ENCODE measurements at regions of chr6 and their contacts with region 1.

Region 1: GRCh38 chr6:105484238-105485161 is 81.6 kb upstream of the PREP start:
- DNase-seq: peak; percentile 64
- H3K4me3 ChIP-seq: no peak overlapping the region
- H3K27ac ChIP-seq: no peak overlapping the region
- H3K4me1 ChIP-seq: peaks cover 22% of the 10 kb centered on the region
- H3K27me3 ChIP-seq: no peaks in the 10 kb centered on the region
- CTCF ChIP-seq: peak; percentile 59 to 60
- POLR2A ChIP-seq: no peak

Region 2: DNA sequence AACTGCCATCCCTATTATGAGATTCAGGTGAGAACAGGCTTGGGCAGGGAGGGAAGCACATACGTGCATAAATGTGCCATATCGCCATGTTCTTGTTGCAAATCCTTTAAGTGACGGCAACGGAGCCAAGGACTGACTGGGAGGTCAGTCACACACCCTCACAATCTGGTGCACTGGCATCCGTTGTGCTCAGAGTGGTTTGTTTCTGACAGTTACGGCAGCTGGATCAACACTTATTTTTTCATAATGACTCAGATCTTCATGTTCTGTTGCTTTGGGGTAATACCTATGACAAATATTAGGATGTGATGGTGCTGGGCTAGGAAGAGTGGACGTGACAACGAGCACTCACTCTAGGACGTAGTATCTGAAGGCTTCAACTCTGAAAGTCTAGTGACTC is 25.5 kb before region 1 on chr6:
- CTCF ChIA-PET with region 1: interaction called, 5 read pairs
- POLR2A ChIA-PET with region 1: no interaction called
- dilution Hi-C with region 1: no loop called
- intact Hi-C with region 1: loop called (anchors 1 kb)
- DNase-seq: peak; percentile 22
- H3K4me3 ChIP-seq: no peak overlapping the region
- H3K27ac ChIP-seq: peak overlapping the region; percentile 81
- H3K4me1 ChIP-seq: peaks cover 25% of the 10 kb centered on the region
- H3K27me3 ChIP-seq: no peaks in the 10 kb centered on the region
- CTCF ChIP-seq: no peak
- POLR2A ChIP-seq: no peak

Region 3: GRCh38 chr6:105733565-105734162 is 249.2 kb after region 1 on chr6:
- CTCF ChIA-PET with region 1: no interaction called
- POLR2A ChIA-PET with region 1: no interaction called
- dilution Hi-C with region 1: no loop called
- intact Hi-C with region 1: loop called (anchors 1 kb)
- DNase-seq: peak; percentile 13
- H3K4me3 ChIP-seq: no peak overlapping the region
- H3K27ac ChIP-seq: no peak overlapping the region
- H3K4me1 ChIP-seq: no peaks in the 10 kb centered on the region
- H3K27me3 ChIP-seq: peaks cover 0 to 3% of the 10 kb centered on the region in 2 experiments
- CTCF ChIP-seq: peak; percentile 36 to 44
- POLR2A ChIP-seq: no peak

Region 4: DNA sequence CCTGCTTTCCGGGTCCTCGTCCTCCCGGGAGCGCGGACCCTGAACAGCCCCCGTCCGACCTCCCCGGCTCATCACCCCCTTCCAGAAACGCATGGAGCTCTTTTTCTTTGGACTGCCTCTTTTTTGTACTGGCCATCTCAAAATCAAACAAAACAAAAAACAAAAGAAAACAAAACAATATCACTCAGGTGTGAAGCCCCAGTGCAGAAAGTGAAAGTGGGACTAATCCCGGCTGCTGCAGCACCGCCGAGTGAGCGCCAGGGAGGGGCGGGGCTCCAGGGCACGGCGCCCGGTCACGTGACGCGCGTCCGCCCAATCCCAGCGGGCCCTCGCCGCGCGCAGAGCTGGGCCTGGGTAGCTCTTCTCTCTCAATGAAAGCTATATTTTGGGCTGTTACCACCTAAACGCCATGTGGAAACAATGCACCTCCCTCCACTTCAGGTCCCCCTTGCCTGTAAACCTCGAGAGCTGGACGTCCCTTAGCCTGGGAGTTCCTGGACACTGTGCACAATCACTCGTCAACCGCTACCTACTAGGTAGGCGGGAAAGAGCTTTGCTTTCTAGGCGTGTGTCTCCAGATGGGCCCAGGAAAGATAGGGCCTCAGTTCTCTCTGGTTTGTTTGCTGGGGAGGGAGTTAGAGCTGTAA is 507.9 kb after region 1 on chr6:
- CTCF ChIA-PET with region 1: interaction called, 4 read pairs
- POLR2A ChIA-PET with region 1: no interaction called
- dilution Hi-C with region 1: no loop called
- intact Hi-C with region 1: loop called (anchors 2 kb)
- DNase-seq: peak; percentile 76
- H3K4me3 ChIP-seq: peak overlapping the region; percentile 55 to 74 (median 72)
- H3K27ac ChIP-seq: no peak overlapping the region
- H3K4me1 ChIP-seq: peaks cover 22% of the 10 kb centered on the region
- H3K27me3 ChIP-seq: peaks cover 81 to 93% of the 10 kb centered on the region in 2 experiments
- CTCF ChIP-seq: no peak
- POLR2A ChIP-seq: no peak

Region 5: GRCh38 chr6:106223300-106223930 is 738.9 kb after region 1 on chr6:
- CTCF ChIA-PET with region 1: interaction called, 12 read pairs
- POLR2A ChIA-PET with region 1: no interaction called
- dilution Hi-C with region 1: no loop called
- intact Hi-C with region 1: loop called (anchors 1 kb)
- DNase-seq: peak; percentile 75
- H3K4me3 ChIP-seq: no peak overlapping the region
- H3K27ac ChIP-seq: no peak overlapping the region
- H3K4me1 ChIP-seq: no peaks in the 10 kb centered on the region
- H3K27me3 ChIP-seq: no peaks in the 10 kb centered on the region
- CTCF ChIP-seq: peak; percentile 26 to 38
- POLR2A ChIP-seq: no peak

Region 6: DNA sequence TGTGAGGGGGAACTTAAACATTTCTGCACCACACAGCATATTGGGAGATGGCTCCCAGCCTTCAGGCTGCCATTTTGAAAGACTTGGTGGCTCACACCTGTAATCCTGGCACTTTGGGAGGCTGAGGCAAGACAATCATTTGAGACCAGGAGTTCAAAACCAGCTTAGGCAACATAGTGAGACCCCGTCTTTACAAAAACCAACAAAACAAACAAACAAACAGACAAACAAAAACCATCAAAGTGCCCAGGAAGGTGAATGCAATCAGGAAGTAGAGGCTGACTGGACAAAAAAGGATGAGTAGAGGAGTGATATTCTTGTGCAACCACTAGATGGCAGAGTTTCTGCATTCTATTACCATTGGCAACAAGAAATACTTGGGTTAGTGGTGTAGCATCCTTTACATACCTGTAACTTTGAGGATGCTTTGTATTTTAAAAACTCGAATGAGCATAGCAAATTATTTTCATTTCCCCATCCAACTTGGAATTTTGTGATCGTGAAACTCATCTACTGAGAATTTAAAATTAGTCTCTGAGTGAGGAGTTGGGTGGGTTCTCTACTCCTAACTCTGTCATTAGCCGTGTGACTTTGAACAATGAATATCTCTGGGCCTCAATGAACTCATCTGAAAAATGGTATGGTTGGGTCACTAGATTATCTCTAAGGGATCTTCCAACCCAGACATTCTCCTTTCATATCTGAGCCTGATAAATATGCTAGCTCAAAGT is 960.4 kb after region 1 on chr6:
- CTCF ChIA-PET with region 1: no interaction called
- POLR2A ChIA-PET with region 1: no interaction called
- dilution Hi-C with region 1: no loop called
- intact Hi-C with region 1: loop called (anchors 2 kb)
- DNase-seq: peak; percentile 52
- H3K4me3 ChIP-seq: no peak overlapping the region
- H3K27ac ChIP-seq: no peak overlapping the region
- H3K4me1 ChIP-seq: no peaks in the 10 kb centered on the region
- H3K27me3 ChIP-seq: peaks cover 14 to 29% of the 10 kb centered on the region in 2 experiments
- CTCF ChIP-seq: peak; percentile 61 to 68
- POLR2A ChIP-seq: no peak

Measured in endothelial cell of umbilical vein (primary cell).